Endothelial cell of umbilical vein (primary cell): ENCODE measurements at regions of chr12 and their contacts with region 1.

Region 1: GRCh38 chr12:45268672-45269411 is 52.9 kb downstream of the ANO6 start:
- DNase-seq: peak; percentile 99
- H3K4me3 ChIP-seq: peak overlapping the region in 1 of 3 experiments; percentile 41
- H3K27ac ChIP-seq: peak overlapping the region; percentile 93
- H3K4me1 ChIP-seq: peaks cover 44% of the 10 kb centered on the region
- H3K27me3 ChIP-seq: no peaks in the 10 kb centered on the region
- CTCF ChIP-seq: peak; percentile 41 to 63
- POLR2A ChIP-seq: peak; percentile 36

Region 2: DNA sequence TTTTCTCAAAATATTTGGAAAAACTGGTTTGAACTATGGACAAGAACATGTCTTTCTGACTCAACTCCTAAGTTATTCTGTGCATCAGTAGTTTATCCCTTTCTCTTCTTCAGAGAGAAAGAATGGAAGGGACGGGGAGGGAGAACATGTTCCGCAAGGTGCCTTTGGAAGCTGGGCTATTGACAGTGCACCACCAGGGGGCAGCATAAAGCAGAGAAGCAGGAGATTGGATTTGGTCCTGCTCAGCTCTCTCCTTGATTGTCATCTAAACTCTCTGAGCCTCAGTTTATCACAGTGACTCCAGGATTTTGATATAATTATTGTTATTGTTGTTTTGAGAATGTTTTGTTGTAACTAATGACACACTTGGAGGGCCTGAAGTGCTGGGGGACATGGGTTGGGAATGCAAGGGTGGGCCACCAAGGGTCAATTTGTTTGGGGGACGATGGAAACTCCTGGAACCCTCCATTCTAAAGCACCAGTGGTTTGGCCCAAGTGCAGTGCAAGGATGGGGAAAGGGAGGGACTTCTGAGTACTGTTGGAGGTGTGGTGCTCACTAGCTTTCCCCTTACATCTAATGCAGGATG is 98.3 kb before region 1 on chr12:
- CTCF ChIA-PET with region 1: interaction called, 21 read pairs
- POLR2A ChIA-PET with region 1: no interaction called
- dilution Hi-C with region 1: no loop called
- intact Hi-C with region 1: loop called (anchors 1 kb)
- DNase-seq: peak; percentile 74
- H3K4me3 ChIP-seq: no peak overlapping the region
- H3K27ac ChIP-seq: no peak overlapping the region
- H3K4me1 ChIP-seq: no peaks in the 10 kb centered on the region
- H3K27me3 ChIP-seq: peaks cover 0 to 5% of the 10 kb centered on the region in 2 experiments
- CTCF ChIP-seq: peak; percentile 86 to 90
- POLR2A ChIP-seq: no peak

Region 3: DNA sequence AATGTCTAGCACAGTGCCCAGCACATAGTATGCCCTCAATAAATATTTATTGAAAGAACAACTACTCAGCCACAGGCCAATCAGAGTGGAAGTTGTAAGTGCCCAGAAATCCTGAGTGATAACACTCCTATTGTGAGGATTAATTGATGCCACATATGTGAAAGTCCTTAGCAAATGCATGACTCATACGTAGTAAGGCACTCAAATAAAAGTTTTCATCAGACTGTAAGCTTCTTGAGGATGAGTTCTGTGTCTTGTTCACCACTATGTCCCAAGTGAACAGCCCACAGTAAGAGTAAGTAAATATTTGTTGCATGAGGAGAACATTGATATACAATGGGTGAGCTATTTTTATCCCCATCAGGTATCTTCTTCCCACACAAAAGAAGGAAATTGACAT is 77.6 kb before region 1 on chr12:
- CTCF ChIA-PET with region 1: interaction called, 7 read pairs
- POLR2A ChIA-PET with region 1: no interaction called
- dilution Hi-C with region 1: no loop called
- intact Hi-C with region 1: loop called (anchors 1 kb)
- DNase-seq: peak; percentile 35
- H3K4me3 ChIP-seq: no peak overlapping the region
- H3K27ac ChIP-seq: no peak overlapping the region
- H3K4me1 ChIP-seq: peaks cover 20% of the 10 kb centered on the region
- H3K27me3 ChIP-seq: no peaks in the 10 kb centered on the region
- CTCF ChIP-seq: no peak
- POLR2A ChIP-seq: no peak

Region 4: GRCh38 chr12:45234139-45234846 is 34.5 kb before region 1 on chr12:
- CTCF ChIA-PET with region 1: interaction called, 44 read pairs
- POLR2A ChIA-PET with region 1: interaction called, 6 read pairs
- dilution Hi-C with region 1: no loop called
- intact Hi-C with region 1: loop called (anchors 1 kb)
- DNase-seq: peak; percentile 98
- H3K4me3 ChIP-seq: peak overlapping the region in 1 of 3 experiments; percentile 20
- H3K27ac ChIP-seq: peak overlapping the region; percentile 100
- H3K4me1 ChIP-seq: peaks cover 52% of the 10 kb centered on the region
- H3K27me3 ChIP-seq: no peaks in the 10 kb centered on the region
- CTCF ChIP-seq: no peak
- POLR2A ChIP-seq: peak; percentile 34

Region 5: GRCh38 chr12:45379261-45379660 is 110.4 kb after region 1 on chr12:
- CTCF ChIA-PET with region 1: interaction called, 8 read pairs
- POLR2A ChIA-PET with region 1: no interaction called
- dilution Hi-C with region 1: no loop called
- intact Hi-C with region 1: loop called (anchors 2 kb)
- DNase-seq: peak; percentile 89
- H3K4me3 ChIP-seq: no peak overlapping the region
- H3K27ac ChIP-seq: no peak overlapping the region
- H3K4me1 ChIP-seq: peaks cover 30% of the 10 kb centered on the region
- H3K27me3 ChIP-seq: no peaks in the 10 kb centered on the region
- CTCF ChIP-seq: no peak
- POLR2A ChIP-seq: no peak

Region 6: DNA sequence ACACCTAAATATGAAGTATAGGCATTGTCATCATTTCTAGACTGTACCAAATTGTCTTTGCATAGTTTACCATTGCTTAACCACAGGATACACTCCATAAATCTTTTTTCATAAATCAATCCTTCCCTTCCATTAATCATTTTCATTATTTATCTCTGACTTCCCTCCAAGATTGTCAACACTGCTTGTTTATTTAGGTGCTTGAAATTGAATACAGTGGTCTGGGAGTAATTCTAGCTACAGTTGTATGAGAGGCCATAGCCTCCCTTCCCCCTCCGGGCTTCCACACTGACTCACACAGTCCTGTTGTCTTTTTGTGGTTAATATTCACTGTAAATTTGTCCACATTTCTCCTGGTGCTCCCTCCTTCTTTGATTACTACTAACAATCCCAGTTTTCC is 346.4 kb after region 1 on chr12:
- CTCF ChIA-PET with region 1: no interaction called
- POLR2A ChIA-PET with region 1: no interaction called
- dilution Hi-C with region 1: no loop called
- intact Hi-C with region 1: loop called (anchors 10 kb)
- DNase-seq: peak; percentile 80
- H3K4me3 ChIP-seq: no peak overlapping the region
- H3K27ac ChIP-seq: no peak overlapping the region
- H3K4me1 ChIP-seq: peaks cover 31% of the 10 kb centered on the region
- H3K27me3 ChIP-seq: peaks cover 0 to 2% of the 10 kb centered on the region in 2 experiments
- CTCF ChIP-seq: no peak
- POLR2A ChIP-seq: peak; percentile 22

Region 7: DNA sequence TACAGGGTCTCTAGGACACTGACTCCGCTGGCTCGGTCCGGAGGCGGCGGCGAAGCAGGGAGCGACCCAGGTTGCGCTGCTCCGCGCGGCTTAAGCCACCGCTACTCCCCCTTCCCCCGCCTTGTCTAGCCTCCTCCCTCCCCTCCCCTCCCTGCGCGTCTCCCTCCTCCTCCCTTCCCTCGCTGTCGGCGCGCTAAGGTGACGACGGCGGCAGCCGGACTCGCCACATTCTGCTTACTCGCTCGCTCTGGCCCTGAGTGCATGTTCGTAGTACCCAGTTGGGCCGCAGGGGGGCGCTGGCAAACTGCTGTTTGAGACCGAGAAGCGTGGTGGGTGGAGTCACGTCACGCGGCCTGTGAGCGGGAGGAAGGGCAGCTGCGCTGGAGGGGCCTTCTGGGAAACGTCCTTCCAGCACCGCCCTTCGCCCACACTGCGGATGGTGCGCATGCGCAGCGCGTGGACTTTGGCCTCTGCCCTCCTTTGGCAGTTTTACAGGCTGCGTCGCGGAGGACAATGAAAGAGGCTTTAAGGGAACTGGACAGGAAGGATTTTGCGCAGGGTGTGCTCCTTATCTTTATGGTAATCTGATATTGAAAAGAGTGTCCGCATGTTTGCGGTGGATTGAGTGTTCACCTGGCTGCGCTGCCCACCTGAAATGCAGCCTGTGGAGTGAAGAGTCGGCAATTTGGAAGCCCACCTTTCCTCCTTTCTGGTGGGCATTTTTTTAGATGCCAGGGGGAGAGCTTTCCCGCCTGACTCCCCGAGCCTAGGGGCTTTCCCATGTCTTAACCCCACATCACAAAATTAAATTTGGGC is 721.8 kb after region 1 on chr12 and contains the start of gene SCAF11:
- CTCF ChIA-PET with region 1: no interaction called
- POLR2A ChIA-PET with region 1: no interaction called
- dilution Hi-C with region 1: no loop called
- intact Hi-C with region 1: loop called (anchors 10 kb)
- DNase-seq: peak; percentile 100
- H3K4me3 ChIP-seq: peak within 1 kb of the TSS; percentile 56 to 91 (median 86)
- H3K27ac ChIP-seq: peak within 1 kb of the TSS; percentile 79
- H3K4me1 ChIP-seq: peaks cover 16% of the 10 kb centered on the region
- H3K27me3 ChIP-seq: no peaks in the 10 kb centered on the region
- CTCF ChIP-seq: peak; percentile 96 to 99
- POLR2A ChIP-seq: peak; percentile 16
- total RNA-seq, gene SCAF11: 95.0 and 109 TPM in 2 replicates